Mammary epithelial cell (primary cell): ENCODE measurements at regions of chr7 and their contacts with region 1.

Region 1: GRCh38 chr7:74068393-74069085 is 15.1 kb upstream of the LIMK1 start:
- DNase-seq: no peak
- H3K4me3 ChIP-seq: no peak overlapping the region
- H3K27ac ChIP-seq: no peak overlapping the region
- H3K4me1 ChIP-seq: no peaks in the 10 kb centered on the region
- H3K27me3 ChIP-seq: no peaks in the 10 kb centered on the region
- CTCF ChIP-seq: no peak

Region 2: DNA sequence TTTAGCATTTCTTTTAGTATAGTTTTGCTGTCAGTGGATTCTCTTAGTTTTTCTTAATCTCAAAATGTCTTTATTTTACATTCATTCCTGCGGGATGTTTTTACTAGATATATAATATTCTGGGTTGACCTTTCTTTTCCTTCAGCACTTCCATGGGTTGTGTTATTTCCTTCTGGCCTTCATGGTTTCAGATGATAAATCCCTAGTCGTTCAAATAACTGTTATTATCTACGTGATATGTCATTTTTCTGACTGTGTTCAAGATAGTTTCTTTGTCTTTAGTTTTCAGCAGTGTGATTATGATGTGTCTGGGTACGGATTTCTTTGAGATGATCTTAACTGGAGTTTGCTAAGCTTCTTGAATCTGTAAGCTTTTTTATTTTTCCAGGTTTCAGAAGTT is 116.3 kb before region 1 on chr7:
- CTCF ChIA-PET with region 1: no interaction called
- dilution Hi-C with region 1: no loop called
- in situ Hi-C with region 1: no loop called
- intact Hi-C with region 1: no loop called
- DNase-seq: no peak
- H3K4me3 ChIP-seq: no peak overlapping the region
- H3K27ac ChIP-seq: no peak overlapping the region
- H3K4me1 ChIP-seq: no peaks in the 10 kb centered on the region
- H3K27me3 ChIP-seq: no peaks in the 10 kb centered on the region
- CTCF ChIP-seq: no peak

Region 3: GRCh38 chr7:74083117-74083876 is 14.8 kb after region 1 on chr7 and contains the start of gene LIMK1:
- CTCF ChIA-PET with region 1: interaction called, 19 read pairs
- dilution Hi-C with region 1: no loop called
- in situ Hi-C with region 1: no loop called
- intact Hi-C with region 1: no loop called
- DNase-seq: peak; percentile 62
- H3K4me3 ChIP-seq: peak within 1 kb of the TSS; percentile 56 to 94 (median 62)
- H3K27ac ChIP-seq: peak within 1 kb of the TSS; percentile 75
- H3K4me1 ChIP-seq: peaks cover 27% of the 10 kb centered on the region
- H3K27me3 ChIP-seq: no peaks in the 10 kb centered on the region
- CTCF ChIP-seq: no peak
- total RNA-seq, gene LIMK1: 23.8 to 31.0 TPM

Region 4: DNA sequence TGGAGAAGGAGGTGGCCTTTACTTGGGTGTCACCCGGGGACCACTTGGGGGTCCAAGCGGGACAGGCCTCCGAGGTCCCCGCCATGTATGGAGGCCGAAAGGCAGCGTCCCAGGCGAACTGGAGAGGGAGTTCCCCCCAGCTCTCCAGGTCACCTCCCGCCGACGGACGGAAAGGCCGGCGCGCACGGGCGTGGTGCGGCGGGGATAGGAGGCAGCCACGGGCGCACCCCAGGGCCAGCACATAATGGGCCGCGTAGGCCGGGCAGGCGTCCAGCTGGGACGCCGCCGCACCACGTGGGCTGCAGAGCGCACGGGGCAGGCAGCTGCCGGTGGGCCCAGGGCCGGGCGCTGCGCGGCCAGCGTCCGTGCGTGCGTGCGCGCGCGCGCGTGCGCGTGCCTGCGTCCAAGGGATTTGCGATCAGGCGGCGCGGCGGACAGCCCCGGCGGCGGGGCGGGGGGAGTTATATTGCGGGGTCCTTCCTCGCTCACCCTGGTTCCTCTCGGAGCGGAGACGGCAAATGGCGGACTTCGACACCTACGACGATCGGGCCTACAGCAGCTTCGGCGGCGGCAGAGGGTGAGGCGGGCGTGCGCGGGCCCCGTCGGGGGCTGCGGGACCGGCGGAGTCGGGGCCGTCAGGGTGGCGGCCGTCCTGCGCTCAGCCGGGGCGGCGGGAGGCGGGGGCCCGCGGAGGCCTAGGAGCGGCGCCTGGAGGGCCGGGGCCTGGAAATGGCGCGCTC is 105.5 kb after region 1 on chr7 and contains the start of gene EIF4H:
- CTCF ChIA-PET with region 1: interaction called, 7 read pairs
- dilution Hi-C with region 1: no loop called
- in situ Hi-C with region 1: no loop called
- intact Hi-C with region 1: loop called (anchors 2 kb)
- DNase-seq: peak; percentile 94
- H3K4me3 ChIP-seq: peak within 1 kb of the TSS; percentile 83 to 98 (median 87)
- H3K27ac ChIP-seq: peak within 1 kb of the TSS; percentile 86
- H3K4me1 ChIP-seq: peaks cover 33% of the 10 kb centered on the region
- H3K27me3 ChIP-seq: no peaks in the 10 kb centered on the region
- CTCF ChIP-seq: no peak
- total RNA-seq, gene EIF4H: 252 to 365 TPM

Region 5: GRCh38 chr7:74183613-74184450 is 115.3 kb after region 1 on chr7:
- CTCF ChIA-PET with region 1: no interaction called
- dilution Hi-C with region 1: no loop called
- in situ Hi-C with region 1: loop called (anchors 5 kb)
- intact Hi-C with region 1: no loop called
- DNase-seq: no peak
- H3K4me3 ChIP-seq: no peak overlapping the region
- H3K27ac ChIP-seq: peak overlapping the region; percentile 22
- H3K4me1 ChIP-seq: peaks cover 58% of the 10 kb centered on the region
- H3K27me3 ChIP-seq: no peaks in the 10 kb centered on the region
- CTCF ChIP-seq: peak in 1 of 2 donors; percentile 55

Region 6: GRCh38 chr7:74199551-74200242 is 131.2 kb after region 1 on chr7:
- CTCF ChIA-PET with region 1: interaction called, 8 read pairs
- dilution Hi-C with region 1: no loop called
- in situ Hi-C with region 1: loop called in 1 of 2 experiments (anchors 10 kb)
- intact Hi-C with region 1: loop called (anchors 1 kb)
- DNase-seq: no peak
- H3K4me3 ChIP-seq: no peak overlapping the region
- H3K27ac ChIP-seq: no peak overlapping the region
- H3K4me1 ChIP-seq: no peaks in the 10 kb centered on the region
- H3K27me3 ChIP-seq: no peaks in the 10 kb centered on the region
- CTCF ChIP-seq: no peak

Region 7: DNA sequence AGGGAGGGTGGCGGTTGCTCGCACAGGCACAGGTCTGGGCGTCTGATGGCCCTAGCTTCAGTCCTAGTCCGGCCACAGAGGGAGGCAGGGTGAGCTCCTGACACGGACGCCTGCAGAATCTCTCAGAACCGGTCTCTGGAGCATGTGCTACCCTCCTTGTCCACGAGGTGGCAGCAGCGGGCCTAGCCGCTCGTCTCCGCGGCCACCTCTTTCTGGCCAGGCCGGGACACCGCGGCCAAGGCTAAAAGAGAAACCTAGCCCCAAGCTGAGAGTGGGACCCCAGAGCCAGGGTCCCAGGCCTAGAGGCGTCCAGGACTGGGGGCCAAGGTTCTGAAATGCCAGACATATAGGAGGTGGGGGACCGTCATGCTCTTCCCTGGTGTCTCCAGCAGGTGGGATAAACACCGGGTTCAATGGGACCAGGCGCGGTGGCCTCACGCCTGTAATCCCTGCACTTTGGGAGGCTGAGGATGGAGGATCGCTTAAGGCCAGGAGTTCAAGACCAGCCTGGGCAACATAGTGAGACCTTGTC is 138.1 kb after region 1 on chr7:
- CTCF ChIA-PET with region 1: interaction called, 8 read pairs
- dilution Hi-C with region 1: no loop called
- in situ Hi-C with region 1: loop called in 1 of 2 experiments (anchors 10 kb)
- intact Hi-C with region 1: loop called (anchors 1 kb)
- DNase-seq: peak; percentile 52
- H3K4me3 ChIP-seq: peak overlapping the region in 1 of 3 experiments; percentile 20
- H3K27ac ChIP-seq: no peak overlapping the region
- H3K4me1 ChIP-seq: peaks cover 13% of the 10 kb centered on the region
- H3K27me3 ChIP-seq: no peaks in the 10 kb centered on the region
- CTCF ChIP-seq: peak; percentile 76 to 95

Region 8: DNA sequence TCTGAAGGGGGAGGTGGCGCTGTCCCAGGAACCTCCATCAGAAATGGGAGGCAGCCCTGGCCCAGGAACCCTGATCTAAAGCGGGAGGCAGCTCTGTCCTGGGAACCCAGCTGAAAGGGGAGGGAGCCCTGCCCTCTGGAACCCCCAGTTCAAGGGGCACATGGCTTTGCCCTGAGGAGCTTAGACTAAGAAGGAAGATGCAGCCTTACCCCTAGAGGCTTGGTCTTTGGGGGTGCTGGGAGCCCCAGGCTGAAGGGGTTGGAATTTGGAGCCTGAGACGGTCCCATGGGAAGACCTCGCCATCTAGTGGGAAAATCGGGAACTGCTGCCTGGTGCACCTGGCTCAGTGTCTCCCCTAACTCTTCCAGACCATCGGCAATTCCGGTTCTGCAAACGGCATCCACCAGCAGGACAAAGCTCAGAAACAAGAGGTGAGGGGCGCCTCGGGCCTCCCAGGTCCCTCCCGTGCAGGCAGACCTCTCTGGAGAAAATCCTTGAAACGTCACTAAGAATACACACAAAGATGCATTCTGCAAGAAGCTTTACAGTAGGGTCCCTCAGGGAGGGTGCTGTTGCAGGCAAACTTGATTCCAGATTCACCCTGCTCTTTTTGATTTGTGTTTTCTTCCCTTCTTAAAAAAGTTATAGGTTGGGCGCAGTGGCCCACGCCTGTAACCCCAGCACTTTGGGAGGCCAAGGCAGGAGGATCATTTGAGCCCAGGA is 332.8 kb after region 1 on chr7:
- CTCF ChIA-PET with region 1: no interaction called
- dilution Hi-C with region 1: loop called (anchors 5 kb)
- in situ Hi-C with region 1: loop called (anchors 10 to 25 kb)
- intact Hi-C with region 1: loop called (anchors 1 kb)
- DNase-seq: peak; percentile 42
- H3K4me3 ChIP-seq: no peak overlapping the region
- H3K27ac ChIP-seq: no peak overlapping the region
- H3K4me1 ChIP-seq: no peaks in the 10 kb centered on the region
- H3K27me3 ChIP-seq: no peaks in the 10 kb centered on the region
- CTCF ChIP-seq: peak; percentile 98